Activated T-helper 1 cell treated with anti-CD3 and anti-CD28 coated beads, Interleukin-12 subunit alpha, Interleukin-12 subunit beta, Interleukin-2, Interleukin-4 antibody, amounts not matched to agents 30 ng/mL and 10 ng/mL and 1 ng/mL, durations not matched to agents 14 hours and 24 hours and 36 hours (primary cell): ENCODE measurements at regions of chr22 and their contacts with region 1.

Region 1: GRCh38 chr22:42964994-42965699 is 49.8 kb downstream of the PACSIN2 start:
- DNase-seq: no peak
- H3K4me3 Mint-ChIP-seq: no peak overlapping the region
- H3K27ac Mint-ChIP-seq: peak overlapping the region; percentile 78
- H3K4me1 Mint-ChIP-seq: peaks cover 44% of the 10 kb centered on the region
- H3K27me3 Mint-ChIP-seq: no peaks in the 10 kb centered on the region

Region 2: GRCh38 chr22:42895087-42895486 is 70.1 kb before region 1 on chr22:
- intact Hi-C with region 1: loop called (anchors 1 kb)
- DNase-seq: peak; percentile 17
- H3K4me3 Mint-ChIP-seq: peak overlapping the region; percentile 50
- H3K27ac Mint-ChIP-seq: peak overlapping the region; percentile 86
- H3K4me1 Mint-ChIP-seq: peaks cover 31% of the 10 kb centered on the region
- H3K27me3 Mint-ChIP-seq: no peaks in the 10 kb centered on the region

Region 3: DNA sequence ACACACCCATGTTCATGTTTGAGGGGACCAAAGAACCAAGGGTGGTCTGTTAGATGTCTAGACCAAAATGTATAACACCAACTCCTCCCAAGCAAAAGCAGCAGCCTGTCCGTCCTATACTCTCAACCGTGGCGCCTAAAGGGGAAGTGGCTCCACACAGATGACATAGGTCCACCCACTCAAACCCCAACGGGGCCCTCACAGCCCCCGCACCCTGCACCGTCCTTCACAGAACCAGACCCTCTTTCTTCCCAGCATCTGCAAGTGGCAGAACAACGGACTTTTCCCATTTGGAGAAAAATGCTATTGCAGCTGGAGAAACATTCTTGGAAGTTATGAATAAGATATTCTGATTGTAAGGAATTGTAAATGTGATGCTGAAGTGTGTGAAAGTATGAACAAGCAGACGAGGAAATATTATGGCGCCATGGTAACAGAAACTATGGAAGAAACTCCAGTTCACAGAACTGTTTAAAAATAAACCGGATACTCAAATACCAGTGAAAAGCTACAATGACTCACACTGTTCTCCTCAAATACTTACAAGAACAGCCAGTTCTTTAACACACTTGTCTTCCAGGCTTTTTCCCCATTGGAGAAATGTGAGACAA is 31.6 kb before region 1 on chr22:
- intact Hi-C with region 1: loop called (anchors 2 kb)
- DNase-seq: no peak
- H3K4me3 Mint-ChIP-seq: peak overlapping the region; percentile 61
- H3K27ac Mint-ChIP-seq: peak overlapping the region; percentile 91
- H3K4me1 Mint-ChIP-seq: peaks cover 71% of the 10 kb centered on the region
- H3K27me3 Mint-ChIP-seq: no peaks in the 10 kb centered on the region